WTC11 (cell line): ENCODE measurements at regions of chr13 and their contacts with region 1.

Region 1: DNA sequence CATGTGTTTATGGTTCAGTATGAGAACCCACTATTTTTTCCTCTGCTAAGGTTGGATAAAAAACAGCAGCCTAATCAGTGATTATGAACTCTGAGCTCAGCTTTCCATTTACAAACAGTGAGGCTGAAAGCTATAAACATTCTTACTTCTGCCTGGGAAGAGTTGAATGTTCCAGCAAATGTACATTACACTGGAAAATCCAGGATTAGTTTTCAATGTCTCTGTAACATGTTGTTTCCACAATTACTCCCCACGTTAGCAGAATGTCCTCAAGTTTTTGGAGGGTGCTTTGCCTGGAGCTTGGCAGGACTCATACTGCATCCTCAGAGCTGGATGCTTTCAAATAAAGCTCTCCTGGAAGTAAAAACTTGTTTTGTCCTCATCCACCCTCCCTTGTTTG is 150.4 kb downstream of the POSTN start:
- DNase-seq: no peak
- ATAC-seq: no peak
- H3K4me3 Mint-ChIP-seq: no peak overlapping the region
- H3K27ac Mint-ChIP-seq: no peak overlapping the region
- H3K4me1 Mint-ChIP-seq: no peaks in the 10 kb centered on the region
- H3K27me3 Mint-ChIP-seq: no peaks in the 10 kb centered on the region
- CTCF ChIP-seq: no peak

Region 2: GRCh38 chr13:37460166-37460565 is 12.0 kb after region 1 on chr13:
- CTCF ChIA-PET with region 1: no interaction called
- POLR2A ChIA-PET with region 1: no interaction called
- DNase-seq: no peak
- ATAC-seq: no peak
- H3K4me3 Mint-ChIP-seq: no peak overlapping the region
- H3K27ac Mint-ChIP-seq: no peak overlapping the region
- H3K4me1 Mint-ChIP-seq: no peaks in the 10 kb centered on the region
- H3K27me3 Mint-ChIP-seq: no peaks in the 10 kb centered on the region; the same call in 1 of the 2 replicates
- CTCF ChIP-seq: no peak

Region 3: GRCh38 chr13:37701972-37702371 is 253.8 kb after region 1 on chr13:
- CTCF ChIA-PET with region 1: no interaction called
- POLR2A ChIA-PET with region 1: interaction called, 13 read pairs
- DNase-seq: no peak
- ATAC-seq: no peak
- H3K4me3 Mint-ChIP-seq: no peak overlapping the region
- H3K27ac Mint-ChIP-seq: no peak overlapping the region
- H3K4me1 Mint-ChIP-seq: no peaks in the 10 kb centered on the region
- H3K27me3 Mint-ChIP-seq: no peaks in the 10 kb centered on the region
- CTCF ChIP-seq: no peak